Dorsolateral prefrontal cortex (tissue), 120 donors: ENCODE measurements at regions of chr12 and their contacts with region 1.

Region 1: DNA sequence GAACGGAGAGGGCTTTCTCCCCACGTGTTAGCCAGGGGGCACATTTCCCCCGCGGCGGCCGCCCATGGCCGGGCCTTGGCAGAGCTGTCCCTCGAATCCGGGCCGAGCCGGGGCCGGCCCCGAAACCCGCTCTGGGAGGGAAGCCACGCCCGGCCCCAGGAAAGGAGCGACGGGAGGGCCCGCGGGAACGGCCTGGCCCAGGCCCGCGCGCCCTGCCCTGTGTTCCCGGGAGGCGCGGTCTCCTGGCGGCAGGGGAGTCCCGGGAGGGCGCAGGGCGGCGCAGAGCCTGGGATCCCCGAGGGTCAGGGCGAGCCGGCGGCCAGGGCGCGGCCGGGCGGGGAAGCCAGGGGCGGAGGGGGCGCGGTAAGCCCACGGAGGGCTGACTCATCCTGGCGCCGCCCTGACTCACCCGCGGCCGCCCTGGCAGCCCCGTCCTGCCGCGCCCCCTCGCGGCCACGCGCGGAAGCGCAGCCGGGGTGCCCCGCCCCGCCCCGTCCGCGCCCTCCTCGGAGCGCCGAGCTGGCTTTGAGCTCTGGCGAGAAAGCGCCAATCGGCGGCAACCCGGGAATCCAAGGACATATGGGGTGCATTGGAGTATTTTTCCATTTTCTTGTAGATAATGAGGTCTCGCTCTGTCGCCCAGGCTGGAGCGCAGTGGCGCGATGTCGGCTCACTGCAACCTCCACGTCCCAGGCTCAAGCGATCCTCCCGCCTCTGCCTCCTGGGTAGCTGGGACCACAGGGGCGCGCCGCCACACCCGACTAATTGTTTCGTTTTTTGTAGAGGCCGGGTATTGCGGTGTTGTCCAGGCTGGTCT is 31.8 kb upstream of the PLEKHG6 start:
- DNase-seq: peak; percentile 19 to 89 (median 62)
- H3K4me3 ChIP-seq: peak overlapping the region; percentile 44 to 81 (median 69)
- H3K27ac ChIP-seq: peak overlapping the region in 55 of 59 donors; percentile 23 to 90 (median 77)
- H3K27me3 ChIP-seq: peaks cover 0 to 4% (median 0%) of the 10 kb centered on the region in 45 donors
- CTCF ChIP-seq: peak; percentile 39 to 99 (median 86)

Region 2: GRCh38 chr12:6062757-6063735 is 215.6 kb before region 1 on chr12:
- intact Hi-C with region 1: loop called (anchors 2 kb)
- DNase-seq: peak in 8 of 10 donors; percentile 46 to 78 (median 62)
- H3K4me3 ChIP-seq: peak overlapping the region in 6 of 59 donors; percentile 7 to 41 (median 28)
- H3K27ac ChIP-seq: peak overlapping the region in 57 of 59 donors; percentile 2 to 90 (median 72)
- H3K27me3 ChIP-seq: no peaks in the 10 kb centered on the region
- CTCF ChIP-seq: peak; percentile 66 to 96 (median 90)

Region 3: DNA sequence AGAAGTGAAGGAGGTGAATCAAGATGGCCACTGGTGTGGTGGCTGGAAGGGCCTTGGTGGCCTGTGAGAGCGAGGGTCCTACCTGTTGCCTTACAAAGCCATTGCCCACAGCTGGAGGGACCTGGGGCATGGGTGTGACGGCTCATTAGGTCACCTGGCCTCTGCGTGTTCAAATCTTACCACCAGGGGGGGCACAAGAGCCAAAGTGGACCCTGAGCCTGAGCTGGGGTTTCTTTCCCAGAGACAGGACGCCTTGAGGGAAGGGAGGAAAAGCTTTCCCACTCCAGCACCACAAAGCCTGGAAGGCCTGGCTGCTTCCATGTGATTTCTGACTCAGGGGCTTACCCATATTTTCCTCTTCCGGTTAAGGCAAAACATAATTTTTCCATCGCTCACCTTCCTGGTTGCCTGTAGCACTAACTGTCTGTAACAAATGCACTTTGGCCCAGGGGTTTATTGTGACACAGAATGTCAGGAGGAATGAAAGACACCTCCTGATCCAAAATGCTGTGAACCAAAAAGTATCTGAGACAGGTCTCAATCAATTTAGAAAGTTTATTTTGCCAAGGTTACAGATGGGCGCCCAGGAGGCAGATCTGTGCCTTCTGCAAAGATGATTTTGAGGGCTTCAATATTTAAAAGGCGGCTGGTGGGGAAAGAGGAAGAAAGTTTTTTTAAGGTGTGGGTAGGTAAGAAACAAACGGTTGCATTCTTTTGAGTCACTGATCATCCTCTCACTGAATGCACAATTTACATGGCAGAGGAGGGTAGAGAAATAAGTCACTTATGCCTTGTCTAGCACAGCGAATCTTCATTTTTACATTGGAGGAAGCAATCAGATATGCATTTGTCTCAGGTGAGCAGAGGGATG is 82.7 kb before region 1 on chr12:
- intact Hi-C with region 1: loop called (anchors 1 to 2 kb)
- DNase-seq: peak; percentile 48 to 89 (median 82)
- H3K4me3 ChIP-seq: no peak overlapping the region
- H3K27ac ChIP-seq: peak overlapping the region in 47 of 59 donors; percentile 1 to 83 (median 52)
- H3K27me3 ChIP-seq: peaks cover 0 to 9% (median 0%) of the 10 kb centered on the region in 45 donors
- CTCF ChIP-seq: peak; percentile 91 to 98 (median 96)

Region 4: DNA sequence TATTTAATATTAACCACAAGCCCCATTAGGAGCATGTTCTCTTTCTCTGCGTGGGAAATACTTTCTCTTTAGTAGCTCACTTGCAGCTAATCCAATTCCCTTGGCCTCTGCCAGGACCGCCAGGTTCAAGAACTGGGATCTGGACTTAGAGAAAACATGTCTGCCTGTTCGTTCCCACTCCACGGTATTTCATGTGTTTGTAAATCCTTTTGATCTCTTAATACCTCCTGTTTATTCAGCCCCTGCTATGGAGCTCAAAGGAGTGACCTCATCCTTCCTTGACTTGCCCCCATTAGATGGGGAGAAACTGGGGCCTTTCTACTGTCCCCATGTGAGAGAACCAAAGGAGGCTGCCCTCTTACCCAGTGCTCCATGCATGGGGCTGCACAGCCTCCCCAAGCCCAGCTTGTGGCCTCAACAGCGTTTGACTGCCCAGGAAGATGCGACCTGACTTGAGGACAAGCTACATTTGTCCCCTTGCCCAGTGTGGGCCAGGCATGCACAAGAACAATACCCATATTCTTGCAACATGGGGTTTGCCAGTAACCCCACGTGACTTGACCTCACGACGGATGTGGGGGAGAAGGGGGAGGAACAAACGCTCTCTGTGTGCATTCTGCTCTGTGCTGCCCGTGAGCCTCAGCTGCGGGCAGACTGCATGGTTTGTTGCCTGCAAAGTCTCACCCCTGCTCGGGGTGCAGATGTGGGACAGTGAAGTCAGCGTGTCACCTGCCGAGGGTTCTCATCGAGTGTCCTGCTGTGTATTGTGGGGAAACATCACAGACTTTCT is 48.1 kb before region 1 on chr12:
- intact Hi-C with region 1: loop called (anchors 5 kb)
- DNase-seq: peak; percentile 48 to 97 (median 90)
- H3K4me3 ChIP-seq: peak overlapping the region in 29 of 59 donors; percentile 1 to 44 (median 21)
- H3K27ac ChIP-seq: peak overlapping the region; percentile 74 to 100 (median 97)
- H3K27me3 ChIP-seq: no peaks in the 10 kb centered on the region
- CTCF ChIP-seq: peak in 9 of 56 donors; percentile 7 to 21 (median 13)